Right ventricle myocardium superior (tissue), 1 donor: ENCODE measurements at regions of chr7 and their contacts with region 1.

Region 1: DNA sequence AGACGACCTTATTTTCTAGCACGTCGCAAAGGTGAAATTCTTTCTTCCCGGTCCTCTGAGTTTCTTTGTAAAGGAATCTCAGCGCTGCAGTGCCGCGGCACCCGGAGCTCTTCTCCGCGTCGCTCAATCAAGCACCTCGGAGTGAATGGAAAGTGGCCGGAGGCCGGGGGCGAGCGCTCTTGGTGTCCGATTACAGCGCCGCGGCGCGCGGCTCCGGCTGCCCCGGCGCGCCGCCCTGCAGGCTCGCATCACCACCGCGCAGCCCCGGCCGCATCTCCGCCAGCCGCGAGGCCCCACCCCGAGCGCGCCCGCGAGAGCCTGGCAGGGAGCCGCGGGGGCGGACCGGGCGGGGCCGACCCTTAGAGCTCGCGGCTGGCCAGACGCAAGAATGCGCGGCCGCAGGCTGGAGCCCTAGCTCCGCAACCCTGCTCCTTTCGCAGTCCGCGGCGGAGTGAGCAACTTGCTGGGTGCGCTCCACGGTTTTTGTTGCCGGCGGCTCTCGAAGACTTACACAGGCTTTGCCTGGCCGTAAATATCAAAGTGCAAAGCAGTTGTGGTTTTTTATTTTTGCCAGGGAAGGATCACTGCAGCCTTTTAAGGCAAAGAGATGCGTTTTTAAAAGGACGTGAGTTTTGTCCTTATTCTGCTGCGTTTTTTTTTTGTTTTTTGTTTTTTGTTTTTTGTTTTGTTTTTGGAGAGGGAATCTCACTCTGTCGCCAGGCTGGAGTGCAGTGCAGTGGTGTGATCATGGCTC is at the start of gene SEMA3C:
- DNase-seq: peak; percentile 95
- ATAC-seq: peak; percentile 98
- total RNA-seq, gene SEMA3C: 66.9 TPM

Region 2: GRCh38 chr7:80883188-80884025 is 35.7 kb before region 1 on chr7:
- intact Hi-C with region 1: no loop called
- DNase-seq: no peak
- ATAC-seq: peak; percentile 68

Region 3: GRCh38 chr7:81064426-81064825 is 145.3 kb after region 1 on chr7:
- intact Hi-C with region 1: loop called (anchors 10 kb)
- DNase-seq: no peak
- ATAC-seq: peak; percentile 67

Region 4: DNA sequence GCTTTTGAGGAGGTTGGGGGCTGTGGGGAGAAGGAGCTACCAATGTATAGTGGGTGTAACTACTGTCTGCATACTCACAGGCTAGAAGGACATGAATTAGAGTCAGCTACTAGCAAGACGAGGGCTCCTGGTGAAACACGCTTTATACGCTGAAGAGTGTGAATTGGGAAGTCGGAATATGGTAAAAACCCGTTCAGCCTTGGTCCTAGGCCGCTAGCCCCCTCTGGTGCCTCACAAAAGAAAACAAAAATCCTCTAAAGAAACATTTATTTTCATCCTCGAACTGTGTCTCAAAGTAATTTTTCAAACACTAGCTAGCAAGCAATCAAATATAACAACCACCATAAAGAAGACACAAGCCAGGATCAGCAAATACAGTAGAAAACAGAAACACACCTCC is 337.9 kb after region 1 on chr7:
- intact Hi-C with region 1: loop called (anchors 10 kb)
- DNase-seq: no peak
- ATAC-seq: peak; percentile 84

Region 5: DNA sequence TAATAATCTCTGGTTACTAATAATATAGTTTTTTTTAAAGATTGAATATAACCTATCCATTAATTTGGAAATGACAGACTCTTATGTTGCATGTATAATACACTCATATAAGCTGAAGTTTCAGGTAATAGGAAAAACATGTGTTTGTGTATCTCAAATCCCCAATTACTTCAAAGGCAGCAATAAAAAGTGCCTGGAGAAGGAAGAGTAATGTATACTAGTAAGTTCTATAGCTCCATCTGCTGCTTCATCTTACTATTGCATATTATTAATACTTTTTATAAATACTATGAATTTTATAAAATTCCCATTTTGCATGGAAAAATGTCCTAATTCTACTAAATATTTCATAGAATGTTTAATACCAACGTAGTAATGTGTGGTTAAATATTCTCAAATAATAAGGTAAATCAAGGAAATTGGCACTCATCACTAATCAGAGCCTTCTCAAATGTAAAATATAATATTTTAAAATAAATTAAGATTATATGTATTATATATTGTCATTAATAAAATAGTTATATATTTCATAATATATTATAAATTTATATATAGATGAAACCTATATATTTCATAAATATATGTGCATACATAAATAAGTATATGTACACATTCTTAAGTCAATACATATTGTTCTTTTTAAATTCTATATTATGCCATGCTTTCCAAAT is 538.9 kb after region 1 on chr7:
- intact Hi-C with region 1: loop called (anchors 10 kb)
- DNase-seq: no peak
- ATAC-seq: no peak